Colonic mucosa (tissue), 4 donors: ENCODE measurements at regions of chr3 and their contacts with region 1.

Region 1: GRCh38 chr3:43105596-43106292 is at the start of gene POMGNT2:
- DNase-seq: peak; percentile 93
- H3K4me3 ChIP-seq: peak within 1 kb of the TSS; percentile 91
- H3K27ac ChIP-seq: no peak within 1 kb of the TSS
- H3K4me1 ChIP-seq: peaks cover 7% of the 10 kb centered on the region
- H3K27me3 ChIP-seq: no peaks in the 10 kb centered on the region
- CTCF ChIP-seq: no peak
- total RNA-seq, gene POMGNT2: 5.2 to 11.0 TPM

Region 2: GRCh38 chr3:42979044-42979972 is 126.4 kb before region 1 on chr3 and contains the start of gene GASK1A:
- intact Hi-C with region 1: loop called (anchors 10 kb)
- DNase-seq: peak; percentile 36
- H3K4me3 ChIP-seq: peak within 1 kb of the TSS; percentile 47
- H3K27ac ChIP-seq: no peak within 1 kb of the TSS
- H3K4me1 ChIP-seq: no peaks in the 10 kb centered on the region
- H3K27me3 ChIP-seq: peaks cover 10% of the 10 kb centered on the region
- CTCF ChIP-seq: no peak
- total RNA-seq, gene GASK1A: 1.3 to 2.2 TPM